ENCODE measurements at regions of chr1 and their contacts with region 1.

Region 1: GRCh38 chr1:169538998-169539871 is 47.0 kb downstream of the F5 start:
- DNase-seq: no peak
- ATAC-seq: no peak
- H3K4me3 ChIP-seq: no peak overlapping the region
- H3K27ac ChIP-seq: no peak overlapping the region
- H3K4me1 ChIP-seq: no peaks in the 10 kb centered on the region
- H3K27me3 ChIP-seq: no peaks in the 10 kb centered on the region
- CTCF ChIP-seq: no peak
- POLR2A ChIP-seq: no peak

Region 2: GRCh38 chr1:169460191-169460833 is 78.9 kb before region 1 on chr1:
- in situ Hi-C with region 1: no loop called
- intact Hi-C with region 1: no loop called
- DNase-seq: peak in 1 of 2 donors; percentile 27
- ATAC-seq: peak; percentile 33 to 59
- H3K4me3 ChIP-seq: peak overlapping the region in 1 of 4 donors; percentile 1
- H3K27ac ChIP-seq: peak overlapping the region; percentile 7 to 51 (median 30)
- H3K4me1 ChIP-seq: peaks cover 0 to 4% of the 10 kb centered on the region in 2 donors
- H3K27me3 ChIP-seq: no peaks in the 10 kb centered on the region
- CTCF ChIP-seq: no peak
- POLR2A ChIP-seq: no peak

Region 3: DNA sequence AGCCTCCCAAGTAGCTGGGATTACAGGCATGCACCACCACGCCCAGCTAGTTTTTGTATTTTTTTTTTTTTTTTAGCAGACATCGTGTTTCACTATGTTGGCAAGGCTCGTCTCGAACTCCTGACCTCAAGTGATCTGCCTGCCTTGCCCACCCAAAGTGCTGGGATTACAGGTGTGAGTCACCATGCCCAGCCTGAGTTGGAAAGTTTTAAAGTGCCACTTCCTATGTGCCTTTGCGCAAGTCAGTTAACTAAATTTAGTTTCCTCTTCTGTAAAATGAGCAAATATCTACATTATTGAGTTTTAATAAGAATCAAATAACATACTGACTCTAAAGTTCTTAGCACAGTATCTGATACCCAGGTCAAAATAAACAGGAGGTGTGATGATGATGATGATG is 65.9 kb before region 1 on chr1:
- in situ Hi-C with region 1: loop called in 1 of 4 experiments (anchors 10 kb)
- intact Hi-C with region 1: no loop called
- DNase-seq: no peak
- ATAC-seq: no peak
- H3K4me3 ChIP-seq: no peak overlapping the region
- H3K27ac ChIP-seq: peak overlapping the region in 3 of 4 donors; percentile 13 to 43 (median 14)
- H3K4me1 ChIP-seq: peaks cover 4 to 8% of the 10 kb centered on the region in 2 donors
- H3K27me3 ChIP-seq: no peaks in the 10 kb centered on the region
- CTCF ChIP-seq: no peak
- POLR2A ChIP-seq: no peak

Measured in gastrocnemius medialis (tissue), 4 donors.